Activated T-helper 1 cell treated with anti-CD3 and anti-CD28 coated beads, Interleukin-12 subunit alpha, Interleukin-12 subunit beta, Interleukin-2, Interleukin-4 antibody, amounts not matched to agents 30 ng/mL and 10 ng/mL and 1 ng/mL, durations not matched to agents 14 hours and 24 hours and 36 hours (primary cell): ENCODE measurements at regions of chr4 and their contacts with region 1.

Region 1: DNA sequence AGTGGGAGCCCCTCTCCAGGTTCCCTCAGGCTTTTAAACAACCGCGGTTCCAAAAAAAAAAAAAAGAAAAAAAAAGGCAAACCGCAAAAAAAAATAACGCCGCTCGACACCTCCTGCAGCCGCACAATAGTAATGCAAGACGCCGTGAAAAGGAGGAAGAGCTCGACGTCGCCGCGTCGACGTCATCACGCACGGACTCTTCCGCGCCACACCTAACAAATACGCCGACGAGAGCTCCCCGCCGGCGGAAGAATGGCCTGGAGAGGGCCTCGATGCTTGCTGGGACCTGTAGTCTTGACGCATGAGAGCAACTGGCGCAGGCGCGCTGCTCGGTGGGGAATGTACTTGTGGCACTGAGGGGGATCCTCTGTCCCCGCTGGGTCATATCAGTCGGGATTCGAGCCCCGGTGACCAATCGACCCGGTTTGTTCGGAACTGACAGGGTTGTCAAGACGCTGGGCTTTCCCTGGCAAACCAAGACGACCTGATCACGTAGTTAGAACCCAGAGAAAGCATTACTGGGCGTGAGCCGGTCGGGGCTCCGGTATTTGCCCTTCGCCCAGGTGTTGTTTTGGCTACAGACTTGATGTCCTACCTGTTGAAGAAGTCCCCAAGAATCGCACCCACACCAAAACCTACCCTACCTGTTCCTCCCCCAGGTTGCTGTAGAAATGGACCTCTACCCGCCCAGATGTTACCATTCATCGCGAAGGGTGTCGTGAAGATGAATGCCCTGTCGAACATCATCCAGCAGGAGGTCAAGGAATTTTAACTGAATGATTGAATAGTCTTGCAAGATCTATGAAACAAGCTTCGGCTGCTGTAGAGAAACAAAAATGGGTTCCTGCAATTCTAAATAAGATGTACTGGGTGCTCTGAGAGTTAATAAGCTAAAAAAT is at the start of gene CBR4:
- DNase-seq: peak; percentile 94
- H3K4me3 Mint-ChIP-seq: peak within 1 kb of the TSS; percentile 93
- H3K27ac Mint-ChIP-seq: peak within 1 kb of the TSS; percentile 96
- H3K4me1 Mint-ChIP-seq: peaks cover 46% of the 10 kb centered on the region
- H3K27me3 Mint-ChIP-seq: peaks cover 6% of the 10 kb centered on the region
- total RNA-seq, gene CBR4: 18.9 and 20.9 TPM in 2 replicates

Region 2: DNA sequence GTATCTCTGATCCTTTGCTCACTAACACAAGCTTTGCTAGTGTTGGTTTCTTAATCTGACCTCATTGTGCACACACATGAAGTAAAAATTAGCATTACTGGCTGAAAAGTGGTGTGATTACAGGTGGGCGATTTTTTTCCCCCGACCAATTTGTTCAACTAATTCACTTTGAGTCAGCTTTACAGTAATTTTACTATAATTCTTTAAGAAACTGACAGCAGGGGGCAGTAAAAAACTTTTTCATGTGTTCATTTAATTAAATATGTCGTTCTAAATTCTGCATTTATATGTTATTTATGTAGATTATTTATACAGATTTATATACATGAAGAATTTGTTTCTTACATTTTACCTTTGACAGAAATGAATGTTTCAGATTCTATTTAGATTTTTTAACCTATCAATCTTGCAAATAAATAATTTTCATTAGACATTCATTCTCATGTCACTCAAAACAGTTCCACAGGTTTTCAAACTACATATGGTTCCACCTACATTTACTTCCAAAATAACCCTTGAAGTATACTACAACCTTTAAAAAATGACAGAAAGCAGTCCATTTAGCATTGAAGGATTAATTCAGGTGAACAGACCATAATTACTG is 496.0 kb before region 1 on chr4:
- intact Hi-C with region 1: loop called (anchors 2 kb)
- DNase-seq: no peak
- H3K4me3 Mint-ChIP-seq: no peak overlapping the region
- H3K27ac Mint-ChIP-seq: no peak overlapping the region
- H3K4me1 Mint-ChIP-seq: peaks cover 30% of the 10 kb centered on the region
- H3K27me3 Mint-ChIP-seq: peaks cover 16% of the 10 kb centered on the region

Region 3: GRCh38 chr4:168923526-168924194 is 86.7 kb before region 1 on chr4:
- intact Hi-C with region 1: loop called (anchors 1 kb)
- DNase-seq: peak; percentile 17
- H3K4me3 Mint-ChIP-seq: no peak overlapping the region
- H3K27ac Mint-ChIP-seq: no peak overlapping the region
- H3K4me1 Mint-ChIP-seq: peaks cover 5% of the 10 kb centered on the region
- H3K27me3 Mint-ChIP-seq: no peaks in the 10 kb centered on the region

Region 4: DNA sequence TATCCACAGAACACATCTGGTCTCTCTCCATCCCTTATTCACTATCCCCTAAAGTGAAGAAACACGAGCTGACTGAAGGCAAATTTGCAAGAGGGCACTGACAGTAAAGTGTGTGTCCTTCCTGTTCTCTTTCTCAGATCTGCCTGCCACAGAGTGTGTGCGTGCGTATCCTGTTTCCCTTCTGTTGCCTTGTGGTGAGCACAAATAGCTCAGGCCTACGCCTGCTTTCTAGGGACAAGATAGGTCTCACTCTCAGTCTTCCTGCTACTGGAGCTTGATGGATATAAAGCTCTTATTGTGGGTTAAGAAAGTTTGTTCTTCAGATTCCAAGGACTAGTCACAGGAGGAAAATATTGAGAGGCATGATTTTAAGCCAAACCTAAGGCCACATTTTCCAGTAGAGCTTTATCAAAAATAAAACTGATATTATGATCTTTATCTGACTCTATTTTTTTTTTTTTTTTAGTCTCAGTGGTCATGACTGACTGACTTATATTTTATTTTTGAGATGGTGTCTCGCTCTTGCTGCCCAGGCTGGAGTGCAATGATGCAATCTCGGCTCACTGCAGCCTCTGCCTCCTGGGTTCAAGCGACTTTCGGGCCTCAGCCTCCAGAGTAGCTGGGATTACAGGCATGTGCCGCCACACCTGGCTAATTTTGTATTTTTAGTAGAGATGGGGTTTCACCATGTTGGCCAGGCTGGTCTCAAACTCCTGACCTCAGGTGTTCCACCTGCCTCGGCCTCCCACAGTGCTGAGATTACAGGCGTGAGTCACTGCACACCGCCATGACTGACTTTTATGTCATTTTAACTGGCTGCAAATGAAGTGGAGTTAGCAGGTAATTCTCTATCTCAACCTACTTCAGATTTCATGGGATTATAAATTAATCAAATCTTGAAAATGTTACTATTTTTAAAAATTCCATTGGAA is 400.7 kb after region 1 on chr4:
- intact Hi-C with region 1: loop called (anchors 5 kb)
- DNase-seq: peak; percentile 55
- H3K4me3 Mint-ChIP-seq: peak overlapping the region; percentile 46
- H3K27ac Mint-ChIP-seq: peak overlapping the region; percentile 8
- H3K4me1 Mint-ChIP-seq: peaks cover 44% of the 10 kb centered on the region
- H3K27me3 Mint-ChIP-seq: no peaks in the 10 kb centered on the region

Region 5: DNA sequence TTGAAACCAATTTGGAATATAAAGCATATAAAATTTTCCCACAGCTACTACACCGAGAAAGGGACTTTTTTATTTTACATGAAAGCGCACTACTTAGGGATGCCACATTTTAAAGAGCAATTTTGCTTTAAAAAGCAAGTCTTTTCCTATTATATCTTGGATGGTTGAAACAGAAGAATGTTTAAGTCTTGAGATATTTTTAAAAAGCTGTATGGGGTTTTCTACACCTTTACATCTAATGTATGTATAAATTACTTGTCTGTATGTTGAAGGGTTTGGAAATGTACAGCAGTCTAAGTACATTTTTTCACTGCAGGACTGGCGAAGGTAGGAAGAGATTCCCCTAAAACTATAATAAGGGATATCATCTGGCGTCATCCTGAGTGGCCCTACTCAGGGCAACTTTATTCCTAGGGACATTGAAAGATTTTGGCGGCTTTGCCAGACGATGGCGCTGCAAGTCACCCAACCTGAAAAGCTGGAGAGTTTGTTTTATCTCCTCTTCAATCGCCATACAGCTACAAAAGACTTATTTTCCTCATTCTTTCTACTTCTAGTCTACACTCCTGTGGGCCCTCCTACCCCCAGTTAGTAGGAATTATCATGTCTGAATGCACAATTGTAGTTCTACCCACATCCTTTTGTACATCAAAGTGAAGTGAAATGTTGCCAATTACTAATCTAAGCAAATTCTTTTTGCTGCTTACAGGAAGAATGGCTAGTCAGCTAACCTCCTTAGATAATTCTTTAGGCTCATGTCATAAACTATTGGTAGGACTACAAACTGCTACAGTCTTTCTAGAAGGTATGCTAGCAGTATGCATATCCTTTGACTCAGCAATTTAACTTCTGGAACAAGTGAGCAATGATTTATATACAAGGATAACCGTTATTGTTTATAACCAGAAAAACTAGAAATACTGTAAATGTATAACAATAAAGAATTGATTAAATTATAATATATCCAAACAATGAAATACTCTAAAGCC is 602.8 kb after region 1 on chr4:
- intact Hi-C with region 1: loop called (anchors 1 kb)
- DNase-seq: peak; percentile 64
- H3K4me3 Mint-ChIP-seq: peak overlapping the region; percentile 98
- H3K27ac Mint-ChIP-seq: peak overlapping the region; percentile 99
- H3K4me1 Mint-ChIP-seq: peaks cover 55% of the 10 kb centered on the region
- H3K27me3 Mint-ChIP-seq: no peaks in the 10 kb centered on the region

Region 6: GRCh38 chr4:170027181-170027829 is 1016.9 kb after region 1 on chr4:
- intact Hi-C with region 1: loop called (anchors 1 kb)
- DNase-seq: peak; percentile 82
- H3K4me3 Mint-ChIP-seq: peak overlapping the region; percentile 85
- H3K27ac Mint-ChIP-seq: peak overlapping the region; percentile 79
- H3K4me1 Mint-ChIP-seq: peaks cover 8% of the 10 kb centered on the region
- H3K27me3 Mint-ChIP-seq: peaks cover 53% of the 10 kb centered on the region